ENCODE measurements at regions of chr12 and their contacts with region 1.

Region 1: GRCh38 chr12:76621582-76622024 is 62.0 kb upstream of the OSBPL8 start:
- DNase-seq: peak in 2 of 3 donors; percentile 55 to 86
- ATAC-seq: peak; percentile 94
- H3K4me3 ChIP-seq: no peak overlapping the region
- H3K4me1 ChIP-seq: peaks cover 6% of the 10 kb centered on the region
- CTCF ChIP-seq: peak; percentile 85

Region 2: GRCh38 chr12:76790564-76791552 is 169.3 kb after region 1 on chr12:
- intact Hi-C with region 1: loop called (anchors 5 kb)
- DNase-seq: no peak
- ATAC-seq: peak; percentile 54
- H3K4me3 ChIP-seq: no peak overlapping the region
- H3K4me1 ChIP-seq: no peaks in the 10 kb centered on the region
- CTCF ChIP-seq: peak; percentile 12

Region 3: DNA sequence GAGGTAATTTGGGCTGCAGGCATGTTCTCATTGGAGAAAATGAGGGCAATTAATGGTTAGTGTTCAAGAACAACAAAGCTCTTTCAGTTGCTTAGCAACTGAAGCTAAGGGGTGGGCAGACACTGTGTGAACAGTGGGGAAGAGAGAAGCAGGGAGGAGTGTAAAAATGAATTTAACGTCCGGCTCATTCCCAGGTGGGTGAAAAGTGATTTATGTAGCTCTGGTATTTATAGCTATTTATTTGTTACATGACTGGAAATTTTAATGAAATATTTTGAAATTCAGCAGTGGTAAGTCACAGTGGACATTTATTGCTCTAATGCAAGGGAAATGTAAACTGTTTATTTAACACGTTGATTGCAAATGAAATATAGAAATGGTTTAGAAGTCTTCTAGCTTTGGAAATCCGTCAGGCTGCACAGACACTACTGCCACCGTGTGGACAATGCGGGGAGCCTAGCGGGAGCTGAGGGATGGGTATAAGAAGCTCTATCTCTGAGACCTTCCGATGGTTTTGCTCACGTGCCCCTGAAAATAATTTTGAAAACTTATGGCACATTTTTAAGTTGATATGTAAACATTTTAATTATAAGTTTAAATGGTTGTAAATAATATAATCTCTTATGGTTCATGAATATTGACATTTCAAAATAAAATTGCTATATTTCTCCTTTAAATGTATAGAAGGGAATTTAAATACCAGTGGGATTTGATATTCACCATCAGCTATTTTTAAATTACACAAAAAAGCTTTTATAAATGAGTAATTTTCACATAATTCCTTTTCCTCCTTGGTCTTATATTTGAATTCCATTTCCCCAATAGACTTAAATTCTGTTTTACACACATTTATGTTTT is 389.3 kb after region 1 on chr12:
- intact Hi-C with region 1: loop called in 1 of 2 experiments (anchors 10 kb)
- DNase-seq: peak; percentile 60 to 81 (median 80)
- ATAC-seq: peak; percentile 83
- H3K4me3 ChIP-seq: no peak overlapping the region
- H3K4me1 ChIP-seq: no peaks in the 10 kb centered on the region
- CTCF ChIP-seq: peak; percentile 86